ENCODE measurements at regions of chr14 and their contacts with region 1.

Region 1: GRCh38 chr14:20469242-20469889 is at the start of gene PNP:
- DNase-seq: peak; percentile 85
- H3K4me3 Mint-ChIP-seq: peak within 1 kb of the TSS; percentile 95
- H3K27ac Mint-ChIP-seq: peak within 1 kb of the TSS; percentile 96
- H3K4me1 Mint-ChIP-seq: peaks cover 40% of the 10 kb centered on the region
- H3K27me3 Mint-ChIP-seq: peaks cover 3% of the 10 kb centered on the region
- total RNA-seq, gene PNP: 149 TPM in 2 replicates

Region 2: GRCh38 chr14:20530771-20531571 is 61.6 kb after region 1 on chr14:
- intact Hi-C with region 1: loop called (anchors 5 kb)
- DNase-seq: peak; percentile 43
- H3K4me3 Mint-ChIP-seq: no peak overlapping the region
- H3K27ac Mint-ChIP-seq: no peak overlapping the region
- H3K4me1 Mint-ChIP-seq: peaks cover 9% of the 10 kb centered on the region
- H3K27me3 Mint-ChIP-seq: peaks cover 50% of the 10 kb centered on the region

Measured in activated T-helper 1 cell treated with anti-CD3 and anti-CD28 coated beads, Interleukin-12 subunit alpha, Interleukin-12 subunit beta, Interleukin-2, Interleukin-4 antibody, amounts not matched to agents 30 ng/mL and 10 ng/mL and 1 ng/mL, durations not matched to agents 14 hours and 24 hours and 36 hours (primary cell).